Left ventricle myocardium inferior (tissue), 1 donor: ENCODE measurements at regions of chr1 and their contacts with region 1.

Region 1: DNA sequence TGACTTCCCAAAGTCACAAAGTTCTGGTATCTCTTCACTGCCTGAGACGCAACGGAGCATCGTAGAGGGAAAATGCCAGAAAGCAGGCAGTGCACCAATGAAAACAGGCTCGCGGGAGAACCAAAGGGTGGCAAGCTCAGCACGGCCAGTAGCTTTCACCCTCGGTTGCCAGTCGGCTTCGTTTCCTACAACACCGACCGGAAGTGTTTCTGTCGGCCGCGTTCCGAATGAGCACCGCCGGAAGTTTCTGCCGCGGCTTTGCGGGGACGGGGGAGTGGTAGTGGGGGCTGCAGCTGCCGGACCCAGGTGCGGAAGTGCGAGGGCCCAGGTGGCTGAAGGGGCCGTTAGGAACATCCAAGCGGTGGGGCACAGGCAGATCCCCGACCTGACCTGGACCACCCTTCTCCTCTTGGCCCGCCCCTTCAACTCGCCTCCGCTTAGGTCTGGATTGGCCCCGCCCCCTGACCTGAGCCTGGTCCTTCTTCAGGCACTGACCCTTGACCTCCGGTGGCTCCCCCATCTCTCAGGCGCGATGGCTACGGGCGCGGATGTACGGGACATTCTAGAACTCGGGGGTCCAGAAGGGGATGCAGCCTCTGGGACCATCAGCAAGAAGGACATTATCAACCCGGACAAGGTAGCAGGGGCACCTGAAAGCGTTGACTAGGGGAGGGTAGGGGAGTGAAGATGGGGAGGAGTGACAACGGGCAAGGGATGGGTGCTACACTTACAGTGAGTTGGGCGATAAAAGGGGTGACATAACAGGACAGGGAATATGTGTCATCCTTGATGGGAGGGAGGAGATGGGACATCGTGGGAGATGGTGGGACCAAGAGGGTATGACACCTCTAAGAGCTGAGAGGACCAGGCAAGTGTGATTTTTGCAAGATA is at the start of gene DMAP1:
- DNase-seq: peak; percentile 80
- H3K4me3 ChIP-seq: peak within 1 kb of the TSS; percentile 85
- H3K27ac ChIP-seq: peak within 1 kb of the TSS; percentile 90
- H3K4me1 ChIP-seq: peaks cover 25% of the 10 kb centered on the region
- H3K27me3 ChIP-seq: no peaks in the 10 kb centered on the region
- CTCF ChIP-seq: no peak
- total RNA-seq, gene DMAP1: 26.7 TPM

Region 2: GRCh38 chr1:44049839-44050238 is 163.6 kb before region 1 on chr1:
- intact Hi-C with region 1: no loop called
- DNase-seq: no peak
- H3K4me3 ChIP-seq: no peak overlapping the region
- H3K27ac ChIP-seq: no peak overlapping the region
- H3K4me1 ChIP-seq: peaks cover 4% of the 10 kb centered on the region
- H3K27me3 ChIP-seq: peaks cover 3% of the 10 kb centered on the region
- CTCF ChIP-seq: no peak

Region 3: GRCh38 chr1:44263568-44264450 is 50.3 kb after region 1 on chr1:
- intact Hi-C with region 1: no loop called
- DNase-seq: no peak
- H3K4me3 ChIP-seq: no peak overlapping the region
- H3K27ac ChIP-seq: no peak overlapping the region
- H3K4me1 ChIP-seq: peaks cover 12% of the 10 kb centered on the region
- H3K27me3 ChIP-seq: no peaks in the 10 kb centered on the region
- CTCF ChIP-seq: no peak

Region 4: DNA sequence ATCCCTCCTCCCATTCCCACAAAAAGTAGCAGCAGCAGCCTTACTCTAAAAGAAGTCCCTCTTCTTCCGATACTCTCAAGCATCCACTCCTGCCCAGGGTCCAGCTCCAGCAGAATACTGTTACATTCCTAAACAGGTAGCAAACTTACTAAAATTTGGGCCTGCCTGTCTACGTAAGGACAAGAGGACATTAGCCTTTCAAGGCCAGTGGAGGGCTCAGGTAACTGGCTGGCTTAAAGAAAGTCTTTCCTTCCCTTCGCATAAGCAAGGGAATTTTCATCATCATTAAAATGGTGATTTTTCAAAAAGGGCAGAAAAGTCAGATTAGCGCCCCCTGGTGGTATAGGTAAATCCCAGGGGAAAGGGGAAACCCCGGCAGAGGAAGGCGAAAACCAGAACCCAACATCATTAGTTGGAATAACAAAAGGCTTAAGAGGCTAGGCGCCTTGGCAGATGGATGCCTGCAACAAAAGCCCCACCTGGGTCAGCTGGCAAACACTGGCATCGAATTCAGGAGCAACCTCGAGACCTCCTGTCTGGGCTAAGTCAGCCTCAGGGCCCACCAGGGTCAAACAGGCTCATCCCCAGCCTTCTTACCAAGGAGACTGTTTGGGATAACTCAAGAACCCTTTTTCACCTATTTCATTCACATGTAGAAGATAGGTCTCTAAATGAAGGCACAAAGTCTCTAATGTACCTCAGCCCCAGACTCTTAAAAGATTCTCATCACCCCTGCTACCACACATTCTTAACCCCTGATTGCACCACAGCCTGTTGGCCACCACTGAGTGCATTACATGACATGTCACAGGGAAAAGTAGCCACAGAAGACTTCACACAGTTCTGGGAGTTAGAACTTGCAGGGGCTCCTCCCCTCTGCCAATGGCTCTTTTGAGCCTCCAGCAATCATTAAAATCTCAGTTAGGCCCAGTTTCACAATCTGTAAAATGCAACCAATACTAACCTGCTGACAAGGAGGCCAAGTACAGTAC is 104.9 kb after region 1 on chr1:
- intact Hi-C with region 1: loop called (anchors 10 kb)
- DNase-seq: no peak
- H3K4me3 ChIP-seq: no peak overlapping the region
- H3K27ac ChIP-seq: no peak overlapping the region
- H3K4me1 ChIP-seq: peaks cover 7% of the 10 kb centered on the region
- H3K27me3 ChIP-seq: no peaks in the 10 kb centered on the region
- CTCF ChIP-seq: peak; percentile 84